WTC11 (cell line): ENCODE measurements at regions of chr4 and their contacts with region 1.

Region 1: DNA sequence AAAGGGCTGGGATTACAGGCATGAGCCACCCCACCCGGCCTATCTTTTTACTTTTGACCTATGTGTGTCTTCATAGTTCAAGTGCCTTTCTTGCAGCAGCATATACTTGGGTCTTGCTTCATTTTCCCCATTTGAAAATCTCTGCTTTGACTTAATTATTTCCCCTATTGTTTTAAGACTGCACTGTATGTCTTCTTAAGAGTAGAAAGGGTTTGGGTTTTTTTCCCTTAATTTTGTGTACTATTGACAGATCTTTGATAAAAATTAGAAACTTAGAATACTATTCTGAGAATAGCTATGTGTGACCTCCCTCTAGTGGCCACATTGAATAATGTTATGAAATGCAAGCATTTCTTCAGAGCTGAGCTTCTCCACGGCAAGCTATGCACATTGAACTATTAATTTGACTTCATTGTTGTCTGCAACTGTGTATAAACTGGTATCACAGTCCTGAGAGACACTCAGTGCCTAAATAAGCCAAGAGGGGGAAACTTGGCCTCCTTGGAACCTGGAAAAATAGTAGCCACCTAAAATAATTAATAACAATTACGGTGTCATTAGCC is 8.7 kb upstream of the SLC25A4 start:
- DNase-seq: no peak
- ATAC-seq: peak; percentile 55
- H3K4me3 Mint-ChIP-seq: no peak overlapping the region
- H3K27ac Mint-ChIP-seq: no peak overlapping the region; the same call in 1 of the 2 replicates
- H3K4me1 Mint-ChIP-seq: peaks cover 14% of the 10 kb centered on the region
- H3K27me3 Mint-ChIP-seq: peaks cover 13% of the 10 kb centered on the region
- CTCF ChIP-seq: peak; percentile 76

Region 2: GRCh38 chr4:184968784-184969201 is 165.6 kb before region 1 on chr4:
- CTCF ChIA-PET with region 1: no interaction called
- POLR2A ChIA-PET with region 1: no interaction called
- DNase-seq: no peak
- ATAC-seq: peak; percentile 47; the same call in 1 of the 2 replicates
- H3K4me3 Mint-ChIP-seq: no peak overlapping the region
- H3K27ac Mint-ChIP-seq: no peak overlapping the region
- H3K4me1 Mint-ChIP-seq: no peaks in the 10 kb centered on the region
- H3K27me3 Mint-ChIP-seq: peaks cover 7% of the 10 kb centered on the region
- CTCF ChIP-seq: no peak

Region 3: GRCh38 chr4:185005216-185005819 is 129.1 kb before region 1 on chr4:
- CTCF ChIA-PET with region 1: interaction called, 23 read pairs
- POLR2A ChIA-PET with region 1: no interaction called
- DNase-seq: peak; percentile 91
- ATAC-seq: peak; percentile 83
- H3K4me3 Mint-ChIP-seq: peak overlapping the region; percentile 77
- H3K27ac Mint-ChIP-seq: no peak overlapping the region
- H3K4me1 Mint-ChIP-seq: peaks cover 18% of the 10 kb centered on the region
- H3K27me3 Mint-ChIP-seq: peaks cover 56% of the 10 kb centered on the region
- CTCF ChIP-seq: peak; percentile 82

Region 4: GRCh38 chr4:185020293-185020808 is 114.0 kb before region 1 on chr4:
- CTCF ChIA-PET with region 1: interaction called, 14 read pairs
- POLR2A ChIA-PET with region 1: no interaction called
- DNase-seq: peak; percentile 74
- ATAC-seq: peak; percentile 11
- H3K4me3 Mint-ChIP-seq: peak overlapping the region; percentile 65
- H3K27ac Mint-ChIP-seq: no peak overlapping the region
- H3K4me1 Mint-ChIP-seq: peaks cover 46% of the 10 kb centered on the region
- H3K27me3 Mint-ChIP-seq: peaks cover 100% of the 10 kb centered on the region
- CTCF ChIP-seq: no peak

Region 5: DNA sequence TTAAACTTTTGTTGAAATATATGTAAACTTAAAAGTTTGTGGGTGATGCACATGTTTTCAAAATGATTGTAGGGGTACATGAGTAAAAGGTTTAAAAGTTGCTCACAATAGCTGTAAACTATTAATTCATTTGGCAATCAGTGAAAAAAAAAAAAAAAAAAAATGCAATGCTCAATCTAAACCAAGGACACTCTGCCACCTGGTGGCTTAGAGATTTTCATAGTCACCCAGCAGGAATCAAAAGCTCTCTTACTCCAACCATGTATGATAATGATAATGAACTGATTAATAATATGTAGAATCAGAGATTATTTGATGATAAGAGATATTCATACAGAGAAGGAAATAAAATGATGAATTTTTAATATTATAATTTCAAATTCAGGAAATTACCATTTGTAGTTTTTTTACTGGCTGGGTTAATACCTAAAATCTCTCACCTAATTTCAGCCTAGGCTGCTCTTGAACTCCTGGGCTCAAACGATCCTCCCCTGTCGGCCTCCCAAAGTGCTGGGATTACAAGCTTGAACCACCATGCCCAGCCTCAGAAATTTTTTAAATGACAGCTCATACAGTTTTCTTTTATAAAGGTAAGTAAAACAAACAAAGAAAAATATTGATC is 38.2 kb before region 1 on chr4:
- CTCF ChIA-PET with region 1: interaction called, 28 read pairs
- POLR2A ChIA-PET with region 1: no interaction called
- DNase-seq: no peak
- ATAC-seq: no peak
- H3K4me3 Mint-ChIP-seq: no peak overlapping the region
- H3K27ac Mint-ChIP-seq: no peak overlapping the region
- H3K4me1 Mint-ChIP-seq: peaks cover 28% of the 10 kb centered on the region
- H3K27me3 Mint-ChIP-seq: no peaks in the 10 kb centered on the region
- CTCF ChIP-seq: no peak

Region 6: DNA sequence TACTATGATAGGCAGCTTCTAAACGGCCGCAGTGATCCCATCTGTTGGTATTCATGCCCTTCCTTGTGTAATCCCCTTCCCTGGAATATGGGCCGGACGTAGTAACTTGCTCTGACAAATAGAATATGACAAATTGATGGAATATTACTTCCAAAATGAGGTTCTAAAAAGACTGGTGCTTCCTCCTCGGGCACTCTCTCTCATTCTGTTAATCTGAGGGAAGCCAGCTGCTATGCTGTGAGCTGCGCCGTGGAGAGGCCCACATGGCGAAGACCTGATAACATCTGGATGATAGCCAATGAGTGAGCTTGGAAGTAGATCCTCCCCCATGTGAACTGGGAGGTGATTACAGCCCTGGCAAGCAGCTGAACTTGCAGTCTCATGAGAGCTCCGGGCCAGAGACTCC is 18.6 kb before region 1 on chr4:
- CTCF ChIA-PET with region 1: interaction called, 14 read pairs
- POLR2A ChIA-PET with region 1: interaction called, 5 read pairs
- DNase-seq: peak; percentile 66
- ATAC-seq: peak; percentile 98
- H3K4me3 Mint-ChIP-seq: no peak overlapping the region
- H3K27ac Mint-ChIP-seq: peak overlapping the region; percentile 90
- H3K4me1 Mint-ChIP-seq: peaks cover 59% of the 10 kb centered on the region
- H3K27me3 Mint-ChIP-seq: no peaks in the 10 kb centered on the region
- CTCF ChIP-seq: no peak

Region 7: GRCh38 chr4:185171373-185172071 is 37.1 kb after region 1 on chr4:
- CTCF ChIA-PET with region 1: no interaction called
- POLR2A ChIA-PET with region 1: no interaction called
- DNase-seq: no peak
- ATAC-seq: no peak
- H3K4me3 Mint-ChIP-seq: no peak overlapping the region
- H3K27ac Mint-ChIP-seq: peak overlapping the region; percentile 23
- H3K4me1 Mint-ChIP-seq: peaks cover 14% of the 10 kb centered on the region
- H3K27me3 Mint-ChIP-seq: no peaks in the 10 kb centered on the region
- CTCF ChIP-seq: no peak

Region 8: GRCh38 chr4:185282968-185283367 is 148.6 kb after region 1 on chr4:
- CTCF ChIA-PET with region 1: no interaction called
- POLR2A ChIA-PET with region 1: no interaction called
- DNase-seq: no peak
- ATAC-seq: peak; percentile 47
- H3K4me3 Mint-ChIP-seq: no peak overlapping the region
- H3K27ac Mint-ChIP-seq: no peak overlapping the region; the same call in 1 of the 2 replicates
- H3K4me1 Mint-ChIP-seq: peaks cover 9% of the 10 kb centered on the region
- H3K27me3 Mint-ChIP-seq: no peaks in the 10 kb centered on the region
- CTCF ChIP-seq: no peak

Region 9: DNA sequence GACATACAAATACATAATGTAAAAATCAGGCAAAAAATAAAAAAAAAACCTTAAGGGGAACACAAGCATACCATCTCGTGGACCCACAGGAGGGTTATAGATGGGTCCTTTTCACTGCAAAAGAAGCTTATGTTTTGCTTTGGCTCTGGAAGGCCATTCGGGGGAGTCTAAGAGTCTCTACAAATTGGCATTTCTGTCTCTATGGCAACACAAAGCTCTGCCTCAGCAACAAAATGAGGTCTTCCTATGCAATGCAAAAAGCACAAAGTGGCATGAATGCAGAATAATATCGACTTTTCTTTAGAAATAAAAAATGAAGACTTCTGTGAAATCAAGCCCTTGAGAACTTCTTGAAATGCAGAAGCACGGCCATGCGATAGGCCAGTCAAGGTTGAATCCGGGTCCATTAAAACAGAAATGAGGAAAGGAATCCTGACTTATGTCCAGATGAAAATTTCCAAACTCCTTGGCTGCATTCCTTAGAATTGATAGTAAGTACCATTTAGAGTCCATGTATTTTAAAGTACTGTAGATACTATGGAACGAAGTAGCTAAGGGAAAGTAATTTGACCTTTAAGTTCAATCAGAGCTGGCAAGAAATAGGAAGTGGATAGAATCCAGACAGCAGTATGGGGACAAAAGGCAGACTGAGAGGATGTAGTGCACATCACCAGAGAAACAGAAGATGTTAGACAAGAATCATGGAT is 464.6 kb after region 1 on chr4:
- CTCF ChIA-PET with region 1: no interaction called
- POLR2A ChIA-PET with region 1: no interaction called
- DNase-seq: no peak
- ATAC-seq: no peak
- H3K4me3 Mint-ChIP-seq: no peak overlapping the region
- H3K27ac Mint-ChIP-seq: no peak overlapping the region
- H3K4me1 Mint-ChIP-seq: peaks cover 3% of the 10 kb centered on the region; the same call in 1 of the 2 replicates
- H3K27me3 Mint-ChIP-seq: no peaks in the 10 kb centered on the region
- CTCF ChIP-seq: no peak